Activated naive CD4-positive, alpha-beta T cell treated with anti-CD3 and anti-CD28 coated beads for 36 hours (primary cell): ENCODE measurements at regions of chr2 and their contacts with region 1.

Region 1: DNA sequence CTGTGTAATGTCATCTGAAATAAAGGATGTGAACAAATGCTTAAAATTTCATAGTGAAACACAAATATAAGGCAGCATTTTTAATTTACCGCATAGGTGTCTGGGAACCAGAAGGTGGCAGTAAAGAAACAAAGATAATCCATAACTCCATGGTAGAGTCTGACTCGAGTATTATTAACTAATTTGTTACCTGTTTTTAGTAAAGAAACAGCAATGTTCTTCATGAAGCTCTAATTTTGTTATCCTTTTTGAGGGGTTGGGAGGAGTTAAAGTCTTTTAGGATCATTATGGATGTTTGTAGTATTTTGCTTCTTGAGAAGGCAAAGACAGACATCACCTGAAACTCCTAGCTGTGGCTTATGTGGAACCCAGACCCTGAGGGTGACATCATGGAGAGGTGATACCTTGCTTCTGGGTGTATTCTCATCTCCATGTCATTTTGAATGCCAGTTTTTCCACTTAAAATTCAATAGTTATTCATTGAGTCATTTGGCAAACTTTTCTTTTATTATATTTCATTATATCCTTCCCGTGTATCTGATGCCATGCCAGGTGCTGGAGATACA is 286.2 kb upstream of the EPAS1 start:
- DNase-seq: no peak
- H3K4me3 Mint-ChIP-seq: no peak overlapping the region
- H3K27ac Mint-ChIP-seq: no peak overlapping the region
- H3K4me1 Mint-ChIP-seq: no peaks in the 10 kb centered on the region
- H3K27me3 Mint-ChIP-seq: no peaks in the 10 kb centered on the region

Region 2: GRCh38 chr2:46062637-46063412 is 51.8 kb after region 1 on chr2:
- CTCF ChIA-PET with region 1: interaction called, 6 read pairs
- intact Hi-C with region 1: loop called (anchors 1 kb)
- DNase-seq: peak; percentile 86
- H3K4me3 Mint-ChIP-seq: no peak overlapping the region
- H3K27ac Mint-ChIP-seq: no peak overlapping the region
- H3K4me1 Mint-ChIP-seq: peaks cover 10% of the 10 kb centered on the region
- H3K27me3 Mint-ChIP-seq: no peaks in the 10 kb centered on the region